ENCODE measurements at regions of chrX and their contacts with region 1.

Region 1: GRCh38 chrX:45077748-45078424 is 122.8 kb downstream of the DIPK2B start:
- DNase-seq: peak in 1 of 2 donors; percentile 13
- ATAC-seq: peak in 2 of 3 donors; percentile 42 to 52
- H3K4me3 ChIP-seq: no peak overlapping the region
- H3K4me3 Mint-ChIP-seq: peak overlapping the region; percentile 43
- H3K27ac ChIP-seq: no peak overlapping the region
- H3K27ac Mint-ChIP-seq: peak overlapping the region; percentile 76 to 87
- H3K4me1 ChIP-seq: no peaks in the 10 kb centered on the region
- H3K4me1 Mint-ChIP-seq: peaks cover 19 to 29% of the 10 kb centered on the region in 2 donors
- H3K27me3 ChIP-seq: no peaks in the 10 kb centered on the region
- H3K27me3 Mint-ChIP-seq: no peaks in the 10 kb centered on the region
- CTCF ChIP-seq: no peak

Region 2: DNA sequence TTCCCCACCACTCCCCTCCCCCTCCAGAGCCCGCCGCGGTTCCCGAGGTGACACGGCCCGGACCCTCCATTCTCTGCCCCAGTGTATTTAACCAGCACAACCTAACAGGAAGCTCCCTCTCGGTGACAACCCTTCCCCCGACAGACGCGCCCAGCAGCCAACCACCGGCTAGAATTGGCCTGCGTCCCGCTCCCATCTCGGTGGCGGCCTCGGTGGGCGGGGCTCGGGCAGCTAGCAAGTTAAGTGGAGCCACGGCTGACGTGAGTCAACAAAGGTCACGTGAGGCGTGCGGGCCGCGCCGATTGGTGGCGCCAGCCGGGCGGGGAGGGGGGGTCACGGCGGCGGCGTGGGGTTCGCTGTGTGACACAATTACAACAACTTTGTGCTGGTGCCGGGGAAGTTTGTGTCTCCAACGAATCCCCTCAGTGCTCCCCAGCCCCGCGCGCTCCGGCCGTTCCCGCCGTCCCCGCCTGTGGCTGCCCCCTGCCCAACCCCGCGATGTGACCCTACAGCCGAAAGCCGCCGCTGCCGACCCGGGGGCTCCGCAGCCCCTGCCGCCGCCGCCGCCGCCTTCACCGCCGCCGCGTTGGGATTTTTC is 205.0 kb before region 1 on chrX and contains the start of gene KDM6A:
- intact Hi-C with region 1: loop called (anchors 5 kb)
- DNase-seq: peak; percentile 90 to 96
- ATAC-seq: peak; percentile 86 to 94 (median 88)
- H3K4me3 ChIP-seq: peak within 1 kb of the TSS; percentile 90
- H3K4me3 Mint-ChIP-seq: peak within 1 kb of the TSS; percentile 97
- H3K27ac ChIP-seq: peak within 1 kb of the TSS; percentile 99
- H3K27ac Mint-ChIP-seq: peak within 1 kb of the TSS; percentile 91 to 95
- H3K4me1 ChIP-seq: no peaks in the 10 kb centered on the region
- H3K4me1 Mint-ChIP-seq: peaks cover 15 to 38% of the 10 kb centered on the region in 2 donors
- H3K27me3 ChIP-seq: no peaks in the 10 kb centered on the region
- H3K27me3 Mint-ChIP-seq: no peaks in the 10 kb centered on the region
- CTCF ChIP-seq: no peak
- total RNA-seq, gene KDM6A: 60.8 to 121 (median 73.1) TPM